ENCODE measurements at regions of chr5 and their contacts with region 1.

Region 1: GRCh38 chr5:169350759-169351240 is 49.9 kb upstream of the SLIT3 start:
- DNase-seq: peak; percentile 94
- H3K4me3 ChIP-seq: no peak overlapping the region
- H3K27ac ChIP-seq: peak overlapping the region; percentile 74
- H3K4me1 ChIP-seq: peaks cover 57% of the 10 kb centered on the region
- H3K27me3 ChIP-seq: no peaks in the 10 kb centered on the region
- CTCF ChIP-seq: peak in 1 of 2 donors; percentile 1
- POLR2A ChIP-seq: no peak

Region 2: DNA sequence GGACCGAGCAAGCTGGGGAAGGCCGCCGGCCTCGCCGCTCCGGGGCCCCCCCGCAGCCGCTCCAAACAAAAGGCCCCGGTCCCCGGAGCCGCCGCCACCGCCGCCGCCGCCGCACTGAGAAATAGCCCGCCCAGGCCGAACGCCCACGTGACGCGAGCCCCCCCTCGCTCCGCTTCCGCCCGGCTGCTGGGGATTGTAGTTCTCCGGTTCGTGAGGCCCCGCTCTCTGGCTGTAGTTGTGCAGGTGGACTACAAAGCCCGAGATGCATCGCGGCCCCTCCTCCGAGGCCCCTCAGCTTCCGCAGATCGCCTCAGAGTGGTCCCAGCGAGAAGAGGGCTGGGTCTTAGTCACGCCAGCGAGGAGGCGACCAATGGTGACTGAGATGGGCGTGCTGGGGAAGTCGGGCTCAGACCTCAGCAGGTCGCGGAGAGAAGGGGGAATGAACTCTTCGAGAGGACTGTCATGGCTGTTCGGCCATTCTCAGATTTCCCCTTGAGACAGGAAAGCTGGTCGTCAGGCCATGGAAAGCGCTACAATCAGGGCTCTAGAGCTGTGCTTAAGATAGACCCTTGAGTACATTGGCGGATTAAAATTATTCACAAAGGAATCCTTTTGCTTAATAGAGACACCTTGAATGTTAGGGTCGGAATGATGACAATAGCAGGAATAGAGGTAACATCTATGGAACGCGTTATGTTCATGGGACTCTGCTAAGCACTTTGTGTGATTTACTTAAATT is 771.1 kb before region 1 on chr5:
- CTCF ChIA-PET with region 1: no interaction called
- POLR2A ChIA-PET with region 1: no interaction called
- dilution Hi-C with region 1: no loop called
- intact Hi-C with region 1: loop called (anchors 2 kb)
- DNase-seq: peak; percentile 99
- H3K4me3 ChIP-seq: peak overlapping the region in 2 of 3 experiments; percentile 80 to 100
- H3K27ac ChIP-seq: peak overlapping the region; percentile 92
- H3K4me1 ChIP-seq: peaks cover 24% of the 10 kb centered on the region
- H3K27me3 ChIP-seq: no peaks in the 10 kb centered on the region
- CTCF ChIP-seq: no peak
- POLR2A ChIP-seq: peak; percentile 92

Region 3: DNA sequence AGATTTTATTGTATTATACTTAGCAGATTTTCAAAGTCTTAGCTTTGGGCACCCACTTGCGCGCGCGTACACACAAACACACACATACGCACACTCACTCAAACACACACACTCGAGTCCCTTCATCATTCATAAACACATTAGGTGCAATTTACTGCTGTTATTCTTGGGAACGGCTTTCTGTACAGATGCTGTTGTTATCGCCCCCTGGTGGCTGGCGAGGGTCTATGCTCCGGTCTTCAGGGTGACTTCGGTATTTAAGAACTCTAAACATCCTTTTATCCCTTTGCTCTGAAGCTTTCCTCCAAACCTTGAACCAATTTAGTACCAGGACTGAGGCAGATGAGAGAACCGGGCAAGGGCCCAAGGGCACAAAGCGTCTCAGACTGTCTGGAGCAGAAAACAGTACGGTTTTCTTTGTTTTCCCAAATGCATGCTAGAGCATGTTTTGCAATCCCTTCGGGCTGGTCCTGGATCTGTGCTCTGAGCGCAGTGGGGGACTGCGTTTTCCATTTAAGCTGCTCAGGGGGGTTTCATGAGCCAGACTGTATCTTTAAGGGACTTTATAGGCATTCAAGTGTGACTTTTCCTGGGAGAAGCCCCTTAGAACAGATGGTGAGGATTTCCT is 48.2 kb before region 1 on chr5:
- CTCF ChIA-PET with region 1: interaction called, 3 read pairs
- POLR2A ChIA-PET with region 1: no interaction called
- dilution Hi-C with region 1: no loop called
- intact Hi-C with region 1: loop called (anchors 2 kb)
- DNase-seq: peak; percentile 85
- H3K4me3 ChIP-seq: no peak overlapping the region
- H3K27ac ChIP-seq: no peak overlapping the region
- H3K4me1 ChIP-seq: peaks cover 4% of the 10 kb centered on the region
- H3K27me3 ChIP-seq: peaks cover 21 to 36% of the 10 kb centered on the region in 2 experiments
- CTCF ChIP-seq: peak; percentile 90 to 93
- POLR2A ChIP-seq: no peak

Region 4: GRCh38 chr5:169442403-169442874 is 91.6 kb after region 1 on chr5:
- CTCF ChIA-PET with region 1: no interaction called
- POLR2A ChIA-PET with region 1: no interaction called
- dilution Hi-C with region 1: no loop called
- intact Hi-C with region 1: loop called (anchors 5 kb)
- DNase-seq: no peak
- H3K4me3 ChIP-seq: no peak overlapping the region
- H3K27ac ChIP-seq: no peak overlapping the region
- H3K4me1 ChIP-seq: peaks cover 7% of the 10 kb centered on the region
- H3K27me3 ChIP-seq: no peaks in the 10 kb centered on the region
- CTCF ChIP-seq: no peak
- POLR2A ChIP-seq: no peak

Region 5: GRCh38 chr5:170132269-170132975 is 781.6 kb after region 1 on chr5:
- CTCF ChIA-PET with region 1: no interaction called
- POLR2A ChIA-PET with region 1: no interaction called
- dilution Hi-C with region 1: no loop called
- intact Hi-C with region 1: loop called (anchors 10 kb)
- DNase-seq: peak; percentile 71
- H3K4me3 ChIP-seq: no peak overlapping the region
- H3K27ac ChIP-seq: peak overlapping the region; percentile 42
- H3K4me1 ChIP-seq: peaks cover 47% of the 10 kb centered on the region
- H3K27me3 ChIP-seq: no peaks in the 10 kb centered on the region
- CTCF ChIP-seq: no peak
- POLR2A ChIP-seq: no peak

Measured in endothelial cell of umbilical vein (primary cell).